HAP-1 (cell line): ENCODE measurements at regions of chr12 and their contacts with region 1.

Region 1: DNA sequence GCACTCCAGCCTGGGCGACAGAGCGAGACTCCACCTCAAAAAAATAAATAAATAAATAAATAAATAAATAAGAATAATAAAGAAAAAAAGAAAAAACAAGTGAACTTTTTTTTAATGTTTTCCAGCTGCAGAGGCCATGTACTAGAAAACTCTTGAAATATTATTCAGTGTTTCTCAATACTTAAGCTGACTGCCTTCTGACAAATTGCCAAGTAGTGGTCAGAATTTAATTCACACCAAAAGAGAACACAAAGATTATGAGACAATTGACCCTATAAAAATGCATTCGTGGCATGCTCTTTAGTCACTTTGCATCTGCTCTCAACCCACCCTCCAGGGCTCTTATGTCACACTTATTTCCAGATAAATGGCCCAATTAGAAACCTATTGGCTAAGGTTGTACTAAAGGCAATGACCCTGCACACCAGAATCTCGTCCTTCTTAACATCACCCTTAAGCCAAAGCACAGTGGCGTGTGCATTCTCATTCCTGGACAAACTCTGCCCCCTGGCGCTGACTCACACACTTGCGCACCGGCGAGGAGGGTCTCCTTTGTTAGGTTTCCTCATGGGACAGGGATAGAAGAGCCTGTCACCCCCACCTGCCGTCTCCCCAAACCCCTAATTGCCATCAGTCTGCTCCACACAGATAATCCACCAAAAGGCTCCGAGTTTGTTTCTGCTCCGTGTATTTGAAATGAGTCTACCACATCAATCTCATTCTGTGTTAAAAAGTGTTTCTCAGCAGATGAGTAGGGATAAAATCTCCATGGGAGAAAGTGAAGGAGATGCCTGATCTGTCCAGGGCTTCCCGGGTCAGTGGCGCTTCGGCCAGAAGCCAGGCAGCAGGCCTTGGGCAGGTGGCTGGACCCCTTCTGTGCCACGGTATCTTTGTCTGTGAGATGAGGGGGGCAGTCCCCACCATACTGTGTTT is 73.1 kb upstream of the CEP83 start:
- DNase-seq: peak; percentile 84 to 91
- H3K4me3 ChIP-seq: no peak overlapping the region
- H3K4me1 ChIP-seq: peaks cover 8% of the 10 kb centered on the region
- H3K27me3 ChIP-seq: no peaks in the 10 kb centered on the region

Region 2: GRCh38 chr12:94139816-94140215 is 392.9 kb before region 1 on chr12:
- in situ Hi-C with region 1: loop called (anchors 5 kb)
- DNase-seq: no peak
- H3K4me3 ChIP-seq: no peak overlapping the region
- H3K4me1 ChIP-seq: no peaks in the 10 kb centered on the region
- H3K27me3 ChIP-seq: no peaks in the 10 kb centered on the region

Region 3: GRCh38 chr12:94980577-94980976 is 447.8 kb after region 1 on chr12:
- in situ Hi-C with region 1: loop called (anchors 25 kb)
- DNase-seq: peak in 1 of 2 experiments; percentile 63
- H3K4me3 ChIP-seq: no peak overlapping the region
- H3K4me1 ChIP-seq: peaks cover 5% of the 10 kb centered on the region; the same call in 1 of the 2 replicates
- H3K27me3 ChIP-seq: no peaks in the 10 kb centered on the region

Region 4: DNA sequence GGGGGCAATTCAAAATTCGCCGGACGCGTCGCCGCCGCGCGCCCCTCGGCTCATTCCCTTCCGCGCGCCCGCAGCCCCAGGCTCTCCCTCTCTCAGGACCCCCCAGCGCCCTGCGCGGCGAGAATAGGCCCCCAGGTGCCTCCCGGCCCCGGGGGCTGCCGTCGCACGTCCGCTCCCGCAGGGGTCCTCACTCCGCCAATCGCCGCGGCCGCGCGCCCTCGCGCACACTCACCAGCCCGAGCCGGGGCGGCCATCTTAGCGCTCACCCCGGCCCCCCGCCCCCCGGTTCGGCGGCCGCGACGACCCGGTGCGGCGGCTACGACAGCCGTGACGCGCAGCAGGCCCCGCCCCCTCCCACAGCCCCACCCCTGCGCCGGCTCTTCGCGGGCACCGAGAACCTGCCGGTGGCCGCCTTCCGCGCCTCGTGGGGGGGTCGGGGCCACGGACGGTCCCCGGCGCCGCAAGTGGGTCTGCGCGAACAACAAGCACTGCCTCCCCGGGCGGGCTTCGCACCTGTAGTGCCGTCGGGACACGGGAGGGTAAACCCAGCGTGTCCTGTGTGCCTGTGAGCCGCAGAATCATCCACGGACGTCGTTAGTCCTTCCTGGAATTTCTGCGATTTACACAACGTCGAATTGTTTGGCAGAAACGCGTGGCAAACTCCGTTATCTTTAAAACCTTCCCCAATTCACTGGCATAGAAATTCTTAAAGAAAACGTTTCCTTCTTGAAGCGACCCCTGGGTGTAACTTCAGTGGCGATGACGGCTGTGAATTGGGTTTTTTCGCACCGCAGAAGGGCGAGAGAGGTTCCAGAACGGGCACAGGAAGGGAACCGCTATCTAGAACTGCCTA is 1016.0 kb after region 1 on chr12:
- in situ Hi-C with region 1: loop called (anchors 25 kb)
- DNase-seq: no peak
- H3K4me3 ChIP-seq: no peak overlapping the region
- H3K4me1 ChIP-seq: peaks cover 30% of the 10 kb centered on the region
- H3K27me3 ChIP-seq: peaks cover 10% of the 10 kb centered on the region

Region 5: DNA sequence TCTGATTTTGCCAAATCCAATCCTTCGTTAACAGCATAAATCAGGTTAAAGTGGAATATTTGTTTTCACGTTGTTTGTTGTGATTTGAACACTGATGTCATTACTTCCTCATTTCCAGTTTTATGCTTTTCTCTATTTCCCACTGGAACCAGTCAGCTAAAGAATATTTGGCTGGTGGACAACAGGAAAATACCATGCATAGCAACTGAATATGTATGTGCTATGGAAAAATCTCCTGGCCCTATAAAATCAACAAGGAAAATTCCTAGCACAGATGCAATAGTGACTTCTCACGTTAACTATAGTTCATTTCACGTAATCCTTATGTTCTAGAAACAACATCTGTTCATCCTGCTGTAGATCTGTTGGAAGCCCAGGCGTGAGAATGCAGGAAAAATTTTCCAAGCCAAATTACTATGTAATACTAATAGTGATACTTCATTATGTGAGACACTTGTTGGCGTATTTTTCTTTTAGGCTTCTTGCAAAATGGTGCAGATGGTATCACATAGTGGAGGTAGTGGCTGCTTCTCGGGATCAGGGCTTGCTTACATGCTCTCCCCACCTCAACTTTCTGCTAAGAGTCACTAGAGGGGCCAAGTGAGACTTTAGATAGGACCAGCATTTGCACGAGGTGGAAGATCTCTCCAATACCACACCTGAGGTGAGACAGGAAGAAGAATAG is 1104.9 kb after region 1 on chr12:
- in situ Hi-C with region 1: no loop called
- DNase-seq: no peak
- H3K4me3 ChIP-seq: no peak overlapping the region
- H3K4me1 ChIP-seq: peaks cover 21% of the 10 kb centered on the region
- H3K27me3 ChIP-seq: no peaks in the 10 kb centered on the region; the same call in 1 of the 2 replicates